BJ (cell line): ENCODE measurements at regions of chr2 and their contacts with region 1.

Region 1: GRCh38 chr2:128754246-128754724 is 435.6 kb upstream of the HS6ST1 start:
- DNase-seq: no peak
- H3K4me3 ChIP-seq: no peak overlapping the region
- H3K27me3 ChIP-seq: no peaks in the 10 kb centered on the region
- CTCF ChIP-seq: no peak

Region 2: GRCh38 chr2:128736689-128737545 is 17.4 kb before region 1 on chr2:
- CTCF ChIA-PET with region 1: interaction called, 22 read pairs
- POLR2A ChIA-PET with region 1: no interaction called
- DNase-seq: no peak
- H3K4me3 ChIP-seq: peak overlapping the region; percentile 22; the same call in 1 of the 2 replicates
- H3K27me3 ChIP-seq: peaks cover 5% of the 10 kb centered on the region; the same call in 1 of the 2 replicates
- CTCF ChIP-seq: peak; percentile 100

Region 3: DNA sequence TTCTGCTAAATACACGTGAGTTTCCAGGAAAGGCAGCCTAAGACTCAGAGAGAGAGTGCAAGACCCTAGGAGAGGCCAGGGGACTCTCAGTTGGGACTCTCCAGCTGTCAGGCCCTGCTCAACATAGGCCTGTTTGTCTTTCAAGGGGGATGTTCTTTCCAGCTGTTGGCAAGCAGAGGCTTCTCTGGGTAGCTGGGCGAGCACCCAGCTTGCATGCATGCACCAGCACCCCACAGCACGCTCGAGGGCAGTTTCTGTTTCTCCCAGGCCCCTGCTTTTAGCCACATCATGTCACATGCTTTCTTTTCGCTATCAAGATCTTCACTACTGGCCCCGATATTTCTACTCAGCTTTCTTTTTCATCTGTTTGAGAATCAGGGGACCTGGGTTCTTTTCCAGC is 43.7 kb after region 1 on chr2:
- CTCF ChIA-PET with region 1: no interaction called
- POLR2A ChIA-PET with region 1: no interaction called
- DNase-seq: no peak
- H3K4me3 ChIP-seq: no peak overlapping the region
- H3K27me3 ChIP-seq: no peaks in the 10 kb centered on the region
- CTCF ChIP-seq: no peak